ENCODE measurements at regions of chr20 and their contacts with region 1.

Region 1: GRCh38 chr20:49330544-49331239 is 52.8 kb upstream of the ZNFX1 start:
- DNase-seq: no peak
- H3K4me3 ChIP-seq: no peak overlapping the region
- H3K4me1 ChIP-seq: no peaks in the 10 kb centered on the region
- H3K27me3 ChIP-seq: peaks cover 40% of the 10 kb centered on the region

Region 2: DNA sequence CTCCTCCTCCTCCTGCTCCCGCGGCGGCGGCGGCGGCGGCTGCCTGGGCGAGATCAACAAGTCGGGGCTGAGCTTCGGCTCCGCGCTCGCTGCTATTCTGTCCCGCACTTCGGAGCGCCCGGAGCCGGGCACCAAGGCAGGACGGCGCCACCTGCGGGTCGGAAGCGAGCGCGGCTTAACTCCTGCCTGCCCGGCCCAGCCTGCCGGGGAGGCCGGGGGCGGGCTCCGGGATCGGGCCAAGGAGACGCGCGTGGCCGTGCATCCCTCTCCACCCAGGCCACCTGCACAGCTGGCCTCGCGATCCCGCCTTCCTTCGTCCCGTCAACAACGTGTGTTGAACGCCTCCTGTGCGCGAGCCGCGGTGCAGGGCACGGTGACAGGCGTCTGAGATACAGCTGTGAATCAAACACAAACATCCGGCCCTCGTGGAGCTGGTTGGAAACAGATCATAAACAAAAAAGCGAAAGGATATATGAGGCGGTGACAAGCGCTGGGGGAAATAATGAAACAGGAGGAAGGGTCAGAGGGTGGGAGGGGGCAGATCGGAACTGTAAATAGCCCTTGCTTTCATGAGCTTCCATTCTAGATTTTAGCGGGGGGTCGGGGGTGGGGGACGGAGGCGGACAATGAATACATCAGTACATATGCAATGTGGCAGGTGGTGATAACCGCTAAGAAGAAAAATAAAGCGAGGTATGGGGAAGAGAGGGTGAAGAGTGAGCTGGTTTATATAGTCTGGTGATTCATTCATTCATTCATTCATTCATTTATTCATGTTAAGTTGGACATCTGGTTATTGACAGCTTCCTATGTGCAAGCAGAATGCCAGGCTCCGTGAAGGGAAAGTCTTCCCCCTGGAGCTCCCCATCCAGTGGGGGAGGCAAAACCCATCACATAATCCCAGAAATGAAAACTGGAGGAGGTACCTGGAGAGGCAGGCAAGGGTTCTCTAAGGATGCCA is 153.8 kb after region 1 on chr20:
- in situ Hi-C with region 1: loop called (anchors 5 kb)
- DNase-seq: peak; percentile 67 to 88
- H3K4me3 ChIP-seq: peak overlapping the region; percentile 18
- H3K4me1 ChIP-seq: no peaks in the 10 kb centered on the region
- H3K27me3 ChIP-seq: peaks cover 11% of the 10 kb centered on the region